Activated CD4-positive, alpha-beta T cell treated with anti-CD3 and anti-CD28 coated beads, Interleukin-2, amount 10 ng/mL, durations not matched to agents 24 days and 14 days (primary cell): ENCODE measurements at regions of chr6 and their contacts with region 1.

Region 1: DNA sequence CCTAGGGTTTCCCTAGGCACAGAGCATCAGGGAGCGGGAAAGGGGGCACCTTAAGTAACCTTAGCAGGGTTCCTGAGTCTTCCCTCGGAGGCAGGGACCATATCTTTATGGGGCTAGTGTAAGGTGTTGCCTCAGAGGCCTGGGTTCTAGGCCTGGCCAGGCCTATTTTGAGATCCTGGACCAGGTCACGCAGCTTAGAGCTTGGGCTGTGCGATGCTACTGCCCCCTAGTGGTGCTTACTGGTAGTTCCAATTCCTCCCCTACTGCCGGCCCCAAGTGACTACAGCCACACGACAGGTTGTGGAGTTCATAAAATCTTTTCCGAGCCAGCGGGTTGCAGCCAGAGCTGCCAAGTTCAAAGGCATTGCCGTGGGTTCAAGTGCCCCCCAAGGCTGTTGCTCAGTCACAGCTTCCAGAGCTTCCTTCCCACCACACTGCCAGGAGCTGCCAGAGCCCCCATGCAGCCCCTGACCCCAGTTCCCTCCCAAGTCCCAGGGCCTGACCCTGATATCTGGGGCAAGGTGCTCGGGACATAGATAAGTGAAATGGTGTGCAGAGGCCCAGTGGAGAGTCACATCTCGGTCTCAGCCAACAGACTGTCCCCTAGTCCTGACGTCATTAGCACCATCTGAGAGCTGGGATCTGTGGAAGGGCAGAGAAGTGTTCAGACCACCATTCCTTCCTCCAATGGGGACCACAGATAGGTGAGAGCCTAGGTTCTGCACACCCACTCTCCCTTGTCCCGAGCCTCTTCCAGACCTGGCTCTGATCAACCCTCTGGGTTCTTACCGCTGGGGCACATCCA is 3.3 kb downstream of the LRRC73 start:
- DNase-seq: peak; percentile 95
- H3K4me3 Mint-ChIP-seq: no peak overlapping the region
- H3K27ac Mint-ChIP-seq: no peak overlapping the region
- H3K4me1 Mint-ChIP-seq: peaks cover 12% of the 10 kb centered on the region
- H3K27me3 Mint-ChIP-seq: peaks cover 19% of the 10 kb centered on the region

Region 2: DNA sequence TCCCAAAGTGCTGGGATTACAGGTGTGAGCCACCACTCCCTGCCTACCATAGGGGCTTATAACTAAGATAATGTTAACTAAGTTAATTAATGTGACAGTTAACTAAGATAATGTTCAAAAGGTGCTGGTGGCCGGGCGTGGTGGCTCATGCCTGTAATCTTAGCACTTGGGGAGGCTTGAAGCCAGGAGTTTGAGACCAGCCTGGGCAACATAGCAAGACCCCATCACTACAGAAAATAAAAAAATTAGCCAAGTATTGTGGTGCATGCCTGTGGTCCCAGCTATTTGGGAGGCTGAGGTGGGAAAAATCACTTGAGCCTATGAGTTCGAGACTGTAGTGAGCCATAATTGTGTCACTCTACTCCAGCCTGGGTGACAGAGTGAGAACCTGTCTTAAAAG is 368.6 kb before region 1 on chr6:
- intact Hi-C with region 1: no loop called
- DNase-seq: no peak
- H3K4me3 Mint-ChIP-seq: no peak overlapping the region
- H3K27ac Mint-ChIP-seq: no peak overlapping the region
- H3K4me1 Mint-ChIP-seq: peaks cover 3% of the 10 kb centered on the region
- H3K27me3 Mint-ChIP-seq: no peaks in the 10 kb centered on the region

Region 3: GRCh38 chr6:43228951-43229802 is 277.7 kb before region 1 on chr6 and contains the start of gene DNPH1:
- intact Hi-C with region 1: no loop called
- DNase-seq: peak; percentile 96
- H3K4me3 Mint-ChIP-seq: peak within 1 kb of the TSS; percentile 92
- H3K27ac Mint-ChIP-seq: peak within 1 kb of the TSS; percentile 92
- H3K4me1 Mint-ChIP-seq: peaks cover 31% of the 10 kb centered on the region
- H3K27me3 Mint-ChIP-seq: peaks cover 16% of the 10 kb centered on the region
- total RNA-seq, gene DNPH1: 78.9 and 79.6 TPM in 2 replicates

Region 4: GRCh38 chr6:43454696-43455530 is 52.0 kb before region 1 on chr6:
- intact Hi-C with region 1: loop called (anchors 1 kb)
- DNase-seq: peak; percentile 71
- H3K4me3 Mint-ChIP-seq: peak overlapping the region; percentile 84
- H3K27ac Mint-ChIP-seq: peak overlapping the region; percentile 34
- H3K4me1 Mint-ChIP-seq: peaks cover 15% of the 10 kb centered on the region
- H3K27me3 Mint-ChIP-seq: peaks cover 30% of the 10 kb centered on the region